IMR-90 (cell line): ENCODE measurements at regions of chr6 and their contacts with region 1.

Region 1: GRCh38 chr6:82040405-82041221 is 206.9 kb downstream of the IBTK start:
- DNase-seq: peak; percentile 59
- ATAC-seq: peak; percentile 99
- H3K4me3 ChIP-seq: no peak overlapping the region
- H3K27ac ChIP-seq: no peak overlapping the region
- H3K4me1 ChIP-seq: no peaks in the 10 kb centered on the region
- H3K27me3 ChIP-seq: no peaks in the 10 kb centered on the region
- CTCF ChIP-seq: peak; percentile 80
- POLR2A ChIP-seq: 0 out of 2 replicates have a peak, but pooled peaks have one; percentile 24
- RAD21 ChIP-seq: peak; percentile 80

Region 2: DNA sequence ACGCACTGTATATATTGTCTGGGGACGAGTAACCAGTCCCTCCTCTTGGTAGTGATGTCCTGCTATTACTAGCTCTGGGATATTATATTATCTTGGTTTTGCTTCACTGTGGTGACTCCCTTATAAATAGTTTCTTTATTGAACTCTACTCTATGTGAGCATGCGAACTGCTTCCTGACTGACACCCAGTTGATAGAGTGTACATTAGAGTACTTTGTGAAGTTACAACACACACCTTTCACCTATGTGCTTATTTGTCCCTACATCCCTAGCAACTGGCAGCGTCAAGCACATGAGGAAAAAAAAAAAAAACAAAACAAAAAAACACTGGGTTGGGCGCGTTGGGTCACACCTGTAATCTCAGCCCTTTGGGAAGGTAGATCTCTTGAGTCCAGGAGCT is 220.8 kb before region 1 on chr6:
- CTCF ChIA-PET with region 1: no interaction called
- POLR2A ChIA-PET with region 1: interaction called, 15 read pairs
- dilution Hi-C with region 1: no loop called
- in situ Hi-C with region 1: no loop called
- intact Hi-C with region 1: no loop called
- DNase-seq: no peak
- ATAC-seq: no peak
- H3K4me3 ChIP-seq: no peak overlapping the region
- H3K27ac ChIP-seq: no peak overlapping the region
- H3K4me1 ChIP-seq: peaks cover 4% of the 10 kb centered on the region
- H3K27me3 ChIP-seq: no peaks in the 10 kb centered on the region
- CTCF ChIP-seq: no peak
- POLR2A ChIP-seq: no peak
- RAD21 ChIP-seq: no peak

Region 3: DNA sequence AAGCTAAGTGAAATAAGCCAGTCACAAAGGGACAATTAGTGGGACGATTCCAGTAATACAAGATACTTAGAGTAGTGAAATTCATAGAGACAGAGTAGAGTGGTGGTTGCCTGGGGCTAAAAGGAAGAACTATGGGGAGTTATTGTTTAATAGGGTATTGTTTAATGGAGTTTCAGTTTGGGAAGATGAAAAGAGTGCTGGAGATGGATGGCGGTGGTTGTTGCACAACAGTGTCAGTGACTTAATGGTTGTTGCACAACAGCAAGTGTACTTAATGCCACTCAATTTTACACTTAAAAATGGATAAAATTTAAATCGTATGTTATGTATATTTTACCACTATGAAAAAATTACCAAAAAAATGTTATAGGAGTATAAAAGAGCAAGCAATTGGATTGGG is 78.4 kb before region 1 on chr6:
- CTCF ChIA-PET with region 1: no interaction called
- POLR2A ChIA-PET with region 1: no interaction called
- dilution Hi-C with region 1: no loop called
- in situ Hi-C with region 1: no loop called
- intact Hi-C with region 1: no loop called
- DNase-seq: no peak
- ATAC-seq: no peak
- H3K4me3 ChIP-seq: no peak overlapping the region
- H3K27ac ChIP-seq: no peak overlapping the region
- H3K4me1 ChIP-seq: no peaks in the 10 kb centered on the region
- H3K27me3 ChIP-seq: no peaks in the 10 kb centered on the region
- CTCF ChIP-seq: no peak
- POLR2A ChIP-seq: no peak
- RAD21 ChIP-seq: no peak

Region 4: DNA sequence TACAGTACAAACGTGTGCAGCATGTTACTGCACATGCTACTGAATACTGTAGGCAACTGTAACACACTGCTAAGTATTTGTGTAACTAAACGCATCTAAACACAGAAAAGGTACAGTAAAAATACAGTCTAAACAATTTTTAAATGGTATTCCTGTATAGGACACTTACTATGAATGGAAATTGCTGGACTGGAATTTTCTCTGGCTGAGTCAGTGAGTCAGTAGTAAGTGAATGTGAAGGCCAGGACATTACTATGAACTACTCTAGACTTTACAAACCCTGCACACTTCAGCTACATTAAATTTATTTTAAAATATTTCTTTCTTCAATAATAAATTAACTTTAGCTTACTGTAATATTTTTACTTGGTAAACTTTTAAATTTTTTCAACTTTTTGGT is 63.1 kb before region 1 on chr6:
- CTCF ChIA-PET with region 1: no interaction called
- POLR2A ChIA-PET with region 1: no interaction called
- dilution Hi-C with region 1: no loop called
- in situ Hi-C with region 1: no loop called
- intact Hi-C with region 1: no loop called
- DNase-seq: peak; percentile 59
- ATAC-seq: peak; percentile 86
- H3K4me3 ChIP-seq: no peak overlapping the region
- H3K27ac ChIP-seq: no peak overlapping the region
- H3K4me1 ChIP-seq: no peaks in the 10 kb centered on the region; the same call in 1 of the 2 replicates
- H3K27me3 ChIP-seq: no peaks in the 10 kb centered on the region
- CTCF ChIP-seq: no peak
- POLR2A ChIP-seq: no peak
- RAD21 ChIP-seq: no peak